ENCODE measurements at regions of chr1 and their contacts with region 1.

Region 1: DNA sequence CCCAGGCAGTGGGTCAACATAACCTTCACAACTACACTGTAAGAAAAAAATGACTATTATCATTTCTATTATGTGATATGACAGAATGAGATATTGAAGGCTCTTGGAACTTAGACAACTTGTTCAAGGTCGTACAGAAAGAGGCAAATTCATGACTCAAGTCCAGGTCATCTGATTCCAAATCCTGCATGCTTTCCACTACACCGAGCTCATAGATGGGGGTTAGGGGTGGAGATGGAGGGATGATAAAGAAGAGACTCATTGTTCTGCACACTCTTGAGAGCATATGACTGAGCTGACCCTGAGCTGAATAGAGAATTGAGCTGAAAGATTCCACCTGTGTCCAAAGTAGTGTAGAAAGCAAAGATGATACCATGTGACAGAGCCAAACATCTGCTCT is 2.8 kb downstream of the FCRL6 start:
- DNase-seq: no peak

Region 2: DNA sequence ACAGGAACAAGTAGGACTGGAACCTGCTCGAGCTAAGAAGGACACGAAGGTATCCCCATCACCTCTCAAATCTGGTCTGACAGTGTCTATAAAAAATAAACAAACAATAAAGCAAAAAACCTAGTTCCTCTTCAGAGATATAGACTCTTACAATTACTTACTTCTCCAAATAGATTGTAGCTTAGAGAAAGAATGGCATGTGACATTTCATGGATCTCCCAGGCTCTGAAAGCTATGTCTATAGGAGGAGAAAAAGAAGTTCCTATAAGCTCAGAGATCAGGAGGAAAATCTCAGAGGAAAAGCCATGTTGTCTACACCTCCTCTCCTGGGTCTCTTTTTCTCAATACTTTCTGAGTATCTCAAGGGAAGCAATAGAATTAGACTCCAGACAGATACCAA is 256.8 kb before region 1 on chr1:
- intact Hi-C with region 1: no loop called
- DNase-seq: no peak

Region 3: DNA sequence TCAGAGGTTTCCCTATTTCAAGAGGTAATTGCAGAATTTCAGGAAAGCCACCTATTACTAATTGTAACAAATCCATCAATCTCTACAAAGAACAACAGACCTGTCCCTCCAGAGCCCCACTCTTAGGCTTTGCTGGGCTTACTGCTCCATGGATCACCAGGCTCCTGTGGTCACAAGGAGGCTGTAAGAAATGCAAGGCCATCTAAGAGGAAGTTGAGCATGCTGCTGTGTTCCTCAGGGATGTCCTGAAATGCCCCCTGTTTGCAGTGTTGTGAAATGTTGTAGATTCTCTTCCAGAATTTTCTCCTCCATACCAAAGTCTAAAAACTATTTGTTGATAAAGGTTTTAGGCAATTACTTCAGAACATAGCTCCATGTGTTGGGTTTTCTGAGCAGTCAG is 48.5 kb before region 1 on chr1:
- intact Hi-C with region 1: no loop called
- DNase-seq: no peak

Region 4: DNA sequence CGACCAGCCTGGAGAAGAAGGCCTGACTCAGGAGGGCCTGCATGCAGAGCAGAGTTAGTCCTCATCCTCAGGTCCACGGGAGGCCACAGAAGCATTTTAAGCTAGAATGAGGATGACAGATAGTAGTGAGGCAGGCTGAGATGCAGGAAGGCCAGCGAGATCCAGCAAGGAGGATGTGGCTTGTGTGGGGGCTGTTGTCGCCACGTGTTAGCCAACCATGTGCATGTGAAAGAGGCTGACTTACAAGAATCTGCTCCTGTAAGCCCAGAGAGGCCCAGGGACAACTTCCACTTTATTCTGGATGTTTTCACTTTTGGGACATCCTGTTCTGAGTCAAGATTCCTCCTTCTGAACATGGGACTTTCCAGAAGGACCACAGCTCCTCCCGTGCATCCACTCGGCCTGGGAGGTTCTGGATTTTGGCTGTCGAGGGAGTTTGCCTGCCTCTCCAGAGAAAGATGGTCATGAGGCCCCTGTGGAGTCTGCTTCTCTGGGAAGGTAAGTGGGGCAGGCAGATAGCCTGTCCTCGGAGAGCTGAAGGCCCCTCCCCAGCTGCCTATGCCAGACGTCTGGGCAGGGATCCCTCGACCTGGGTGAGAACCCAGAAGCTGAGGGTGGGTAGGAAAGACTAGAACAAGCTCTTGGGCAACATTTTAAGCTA is 21.6 kb after region 1 on chr1 and contains the start of gene SLAMF8:
- intact Hi-C with region 1: loop called in 1 of 2 experiments (anchors 1 kb)
- DNase-seq: no peak
- total RNA-seq, gene SLAMF8: 4.8 to 10.5 TPM

Measured in posterior vena cava (tissue), 2 donors.